ENCODE measurements at regions of chr1 and their contacts with region 1.

Region 1: DNA sequence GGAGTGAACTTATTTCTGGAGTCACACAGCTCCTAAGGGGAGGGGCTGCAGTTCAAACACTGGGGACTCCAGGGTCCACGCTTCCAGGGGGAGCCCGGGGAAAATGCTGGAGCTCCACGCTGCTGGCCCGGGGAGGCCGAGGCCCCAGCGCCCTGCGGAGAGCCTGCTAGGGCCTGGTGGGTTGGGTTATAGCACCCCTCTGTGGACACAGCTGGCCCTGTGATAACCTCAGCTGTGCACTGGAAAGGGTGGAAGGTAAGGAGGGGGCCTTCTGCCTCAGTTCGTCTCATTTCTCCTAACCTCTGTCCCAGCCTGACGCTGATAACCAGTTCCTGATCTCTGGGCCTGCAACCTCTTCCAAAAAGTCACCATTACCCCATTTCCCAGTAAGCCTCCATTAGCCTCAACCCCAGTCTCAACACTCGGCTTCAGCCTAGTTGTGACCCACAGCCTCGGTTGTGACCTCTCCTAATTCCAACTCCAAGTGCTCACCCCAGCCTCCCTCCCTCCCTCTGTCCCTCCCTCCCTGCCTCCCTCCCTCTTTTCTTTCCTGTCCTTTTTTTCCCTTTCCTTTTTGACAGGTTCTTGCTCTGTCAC is 7.1 kb downstream of the NBL1 start:
- H3K4me3 ChIP-seq: no peak overlapping the region
- H3K27ac ChIP-seq: no peak overlapping the region
- H3K4me1 ChIP-seq: no peaks in the 10 kb centered on the region
- CTCF ChIP-seq: peak; percentile 90

Region 2: DNA sequence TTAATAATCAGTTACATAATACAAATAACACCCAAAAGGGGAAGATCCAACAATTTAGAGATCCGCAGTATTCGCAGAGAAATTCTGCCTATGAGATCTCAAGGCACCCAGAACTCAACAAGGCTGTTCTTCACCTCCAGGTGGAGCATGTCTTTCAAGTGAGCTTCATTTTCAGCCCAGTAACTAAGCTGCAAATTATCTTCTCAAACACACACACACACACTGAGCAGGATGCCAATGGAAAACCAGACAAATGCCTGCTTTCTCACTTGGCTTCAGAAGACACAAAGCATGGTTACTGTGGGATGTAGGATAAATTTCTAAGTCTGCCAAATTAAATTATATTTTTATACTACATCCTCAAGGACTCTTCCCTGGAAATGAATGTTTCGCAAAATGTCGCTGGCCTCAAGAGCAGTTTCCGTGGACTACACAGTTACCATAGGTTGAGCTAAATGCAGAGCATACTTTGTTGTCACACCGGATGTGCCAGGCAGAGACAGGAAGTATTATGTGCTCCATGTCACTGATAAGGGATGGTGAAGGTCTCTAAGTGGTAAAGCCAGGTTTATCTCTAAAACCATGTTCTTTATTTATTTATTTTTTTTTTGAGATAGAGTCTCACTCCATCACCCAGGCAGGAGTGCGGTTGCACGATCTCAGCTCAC is 471.5 kb before region 1 on chr1:
- CTCF ChIA-PET with region 1: interaction called, 11 read pairs
- POLR2A ChIA-PET with region 1: no interaction called
- H3K4me3 ChIP-seq: no peak overlapping the region
- H3K27ac ChIP-seq: no peak overlapping the region
- H3K4me1 ChIP-seq: no peaks in the 10 kb centered on the region
- CTCF ChIP-seq: no peak

Region 3: GRCh38 chr1:19344372-19345230 is 306.6 kb before region 1 on chr1:
- CTCF ChIA-PET with region 1: interaction called, 12 read pairs
- POLR2A ChIA-PET with region 1: no interaction called
- H3K4me3 ChIP-seq: no peak overlapping the region
- H3K27ac ChIP-seq: no peak overlapping the region
- H3K4me1 ChIP-seq: no peaks in the 10 kb centered on the region
- CTCF ChIP-seq: peak; percentile 73

Region 4: DNA sequence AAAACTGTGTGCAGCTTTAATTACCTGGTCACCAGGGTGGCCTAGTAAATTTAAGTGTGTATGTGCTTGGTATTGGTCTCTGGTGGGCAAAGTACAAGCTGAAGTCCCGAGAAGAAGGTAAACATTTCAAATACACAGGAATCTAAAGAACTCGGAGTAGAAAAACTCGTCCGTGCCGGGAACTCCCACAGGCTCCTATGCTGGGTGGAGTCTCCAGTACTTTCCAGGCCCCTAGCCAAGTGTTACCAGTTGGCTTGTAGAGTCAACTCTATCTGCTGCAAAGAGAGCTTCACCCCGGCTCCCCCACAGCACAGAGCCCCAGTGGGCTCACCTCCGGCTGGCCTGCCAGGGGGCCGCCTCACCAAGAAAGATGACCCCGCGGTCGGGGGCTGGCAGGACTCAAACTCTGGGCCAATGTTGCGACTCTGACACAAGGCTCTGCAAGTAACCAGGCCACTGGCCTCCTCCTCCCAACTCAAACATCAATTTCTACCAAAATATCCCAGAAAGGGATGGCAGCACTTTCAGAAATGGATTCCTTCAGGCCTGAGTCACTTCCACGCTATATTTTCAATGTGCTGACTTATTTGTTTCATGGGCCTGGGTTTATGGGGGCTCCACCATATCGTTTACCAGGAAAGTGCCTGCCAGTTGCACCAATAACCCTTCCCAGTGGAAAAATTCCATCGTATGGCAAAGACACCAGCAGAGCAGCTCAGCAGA is 265.2 kb before region 1 on chr1:
- CTCF ChIA-PET with region 1: interaction called, 11 read pairs
- POLR2A ChIA-PET with region 1: no interaction called
- H3K4me3 ChIP-seq: no peak overlapping the region
- H3K27ac ChIP-seq: no peak overlapping the region
- H3K4me1 ChIP-seq: peaks cover 6% of the 10 kb centered on the region; the same call in 1 of the 2 replicates
- CTCF ChIP-seq: no peak